Upper lobe of right lung (tissue), 1 donor: ENCODE measurements at regions of chr5 and their contacts with region 1.

Region 1: GRCh38 chr5:14720236-14720971 is 55.9 kb downstream of the OTULIN start:
- DNase-seq: no peak
- ATAC-seq: no peak
- H3K4me3 ChIP-seq: no peak overlapping the region
- H3K27ac ChIP-seq: no peak overlapping the region
- H3K4me1 ChIP-seq: no peaks in the 10 kb centered on the region
- H3K27me3 ChIP-seq: no peaks in the 10 kb centered on the region
- CTCF ChIP-seq: no peak

Region 2: GRCh38 chr5:15014809-15015208 is 294.4 kb after region 1 on chr5:
- intact Hi-C with region 1: loop called (anchors 5 kb)
- DNase-seq: no peak
- ATAC-seq: no peak
- H3K4me3 ChIP-seq: no peak overlapping the region
- H3K27ac ChIP-seq: no peak overlapping the region
- H3K4me1 ChIP-seq: peaks cover under 1% of the 10 kb centered on the region
- H3K27me3 ChIP-seq: no peaks in the 10 kb centered on the region
- CTCF ChIP-seq: no peak